ENCODE measurements at regions of chr17 and their contacts with region 1.

Region 1: DNA sequence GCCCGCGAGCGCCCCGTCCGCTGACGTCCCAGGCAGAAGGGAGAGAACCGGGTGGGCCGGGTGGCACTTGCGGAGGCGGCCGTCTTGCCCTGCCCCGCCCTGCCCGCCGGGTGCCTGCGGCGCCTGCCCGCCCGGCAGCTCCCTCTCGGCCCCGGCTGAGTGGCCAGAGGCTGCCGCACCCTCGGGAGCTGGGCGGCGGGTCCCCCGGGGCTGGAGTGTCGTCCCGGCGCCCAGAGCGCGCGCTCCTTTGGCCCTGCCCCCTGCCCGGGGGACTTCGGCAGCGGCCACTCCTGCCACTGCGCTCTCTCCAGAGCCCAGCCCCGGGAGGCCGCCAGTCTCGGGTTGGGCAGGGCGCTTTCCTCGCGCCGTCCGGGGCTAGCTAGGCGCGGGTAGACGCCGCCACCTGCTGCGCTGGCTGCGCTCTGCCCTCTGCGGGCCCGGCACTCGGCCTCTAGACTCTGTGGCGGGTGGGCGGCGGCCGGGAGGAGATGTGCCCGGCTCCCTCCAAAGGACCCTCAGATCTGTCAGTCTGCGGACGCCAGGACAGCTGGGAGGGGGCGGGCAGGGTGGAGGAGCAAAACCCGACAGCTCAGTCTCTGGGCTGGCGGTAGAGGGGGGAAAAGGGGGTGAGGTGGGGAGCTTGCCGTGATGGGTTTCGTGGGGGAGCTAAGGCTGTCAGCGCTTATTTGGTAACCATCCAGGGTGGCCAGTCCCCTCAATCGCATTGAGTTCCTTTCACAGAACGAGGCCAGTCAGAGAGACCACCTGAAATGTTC is at the start of gene ST6GALNAC2:
- DNase-seq: peak in 8 of 9 experiments; percentile 6 to 76 (median 44)
- ATAC-seq: peak; percentile 75
- H3K4me3 ChIP-seq: peak within 1 kb of the TSS; percentile 43 to 50
- H3K4me3 Mint-ChIP-seq: peak within 1 kb of the TSS; percentile 76
- H3K27ac ChIP-seq: no peak within 1 kb of the TSS
- H3K27ac Mint-ChIP-seq: no peak within 1 kb of the TSS
- H3K4me1 ChIP-seq: peaks cover 12% of the 10 kb centered on the region
- H3K4me1 Mint-ChIP-seq: peaks cover 11% of the 10 kb centered on the region
- H3K27me3 ChIP-seq: peaks cover 13 to 17% of the 10 kb centered on the region in 2 experiments
- H3K27me3 Mint-ChIP-seq: peaks cover 52% of the 10 kb centered on the region
- CTCF ChIP-seq: no peak
- total RNA-seq, gene ST6GALNAC2: 0.50 to 1.7 TPM

Region 2: DNA sequence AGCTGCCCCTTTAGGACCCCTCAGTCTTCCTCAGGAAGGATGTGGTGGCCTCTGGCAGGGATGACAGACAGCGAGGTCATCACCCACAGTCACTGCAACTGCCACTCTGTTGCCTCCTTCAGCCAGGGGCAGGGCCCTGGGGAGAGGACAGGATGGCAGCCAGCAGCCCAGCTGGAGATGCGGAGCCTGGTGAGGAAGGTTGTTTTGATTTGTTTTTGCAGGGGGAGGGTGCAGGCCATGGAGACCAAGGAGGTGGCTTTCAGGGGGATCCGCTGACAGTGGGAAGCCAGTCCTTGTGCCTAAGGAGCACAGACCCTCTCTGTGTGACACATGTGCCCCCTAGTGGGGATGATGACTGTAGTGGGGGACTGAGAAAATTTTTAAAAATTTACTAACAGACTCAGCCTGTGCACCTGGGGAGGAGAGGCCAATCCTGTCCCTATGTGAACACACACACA is 38.8 kb before region 1 on chr17:
- CTCF ChIA-PET with region 1: interaction called, 3 read pairs
- POLR2A ChIA-PET with region 1: no interaction called
- intact Hi-C with region 1: loop called in 1 of 2 experiments (anchors 5 kb)
- DNase-seq: peak; percentile 30 to 83 (median 72)
- ATAC-seq: peak; percentile 94
- H3K4me3 ChIP-seq: no peak overlapping the region
- H3K4me3 Mint-ChIP-seq: no peak overlapping the region
- H3K27ac ChIP-seq: no peak overlapping the region
- H3K27ac Mint-ChIP-seq: no peak overlapping the region
- H3K4me1 ChIP-seq: peaks cover 7% of the 10 kb centered on the region
- H3K4me1 Mint-ChIP-seq: peaks cover 11% of the 10 kb centered on the region
- H3K27me3 ChIP-seq: no peaks in the 10 kb centered on the region
- H3K27me3 Mint-ChIP-seq: peaks cover 8% of the 10 kb centered on the region
- CTCF ChIP-seq: peak; percentile 62

Region 3: GRCh38 chr17:76567634-76568432 is 18.2 kb before region 1 on chr17:
- CTCF ChIA-PET with region 1: interaction called, 4 read pairs
- POLR2A ChIA-PET with region 1: interaction called, 4 read pairs
- intact Hi-C with region 1: loop called in 1 of 2 experiments (anchors 2 kb)
- DNase-seq: peak in 2 of 9 experiments; percentile 50 to 69
- ATAC-seq: peak; percentile 35
- H3K4me3 ChIP-seq: no peak overlapping the region
- H3K4me3 Mint-ChIP-seq: no peak overlapping the region
- H3K27ac ChIP-seq: peak overlapping the region in 1 of 2 experiments; percentile 28
- H3K27ac Mint-ChIP-seq: peak overlapping the region; percentile 60
- H3K4me1 ChIP-seq: peaks cover 19% of the 10 kb centered on the region
- H3K4me1 Mint-ChIP-seq: peaks cover 39% of the 10 kb centered on the region
- H3K27me3 ChIP-seq: no peaks in the 10 kb centered on the region
- H3K27me3 Mint-ChIP-seq: no peaks in the 10 kb centered on the region
- CTCF ChIP-seq: no peak

Region 4: GRCh38 chr17:76630151-76630550 is 44.1 kb after region 1 on chr17:
- CTCF ChIA-PET with region 1: no interaction called
- POLR2A ChIA-PET with region 1: no interaction called
- intact Hi-C with region 1: no loop called
- DNase-seq: no peak
- ATAC-seq: no peak
- H3K4me3 ChIP-seq: no peak overlapping the region
- H3K4me3 Mint-ChIP-seq: no peak overlapping the region
- H3K27ac ChIP-seq: no peak overlapping the region
- H3K27ac Mint-ChIP-seq: no peak overlapping the region
- H3K4me1 ChIP-seq: no peaks in the 10 kb centered on the region
- H3K4me1 Mint-ChIP-seq: no peaks in the 10 kb centered on the region
- H3K27me3 ChIP-seq: no peaks in the 10 kb centered on the region
- H3K27me3 Mint-ChIP-seq: peaks cover 2% of the 10 kb centered on the region
- CTCF ChIP-seq: no peak

Region 5: GRCh38 chr17:76643553-76644148 is 57.6 kb after region 1 on chr17 and contains the start of gene ST6GALNAC1:
- CTCF ChIA-PET with region 1: no interaction called
- POLR2A ChIA-PET with region 1: no interaction called
- intact Hi-C with region 1: no loop called
- DNase-seq: peak in 4 of 9 experiments; percentile 15 to 53 (median 29)
- ATAC-seq: peak; percentile 62
- H3K4me3 ChIP-seq: no peak within 1 kb of the TSS
- H3K4me3 Mint-ChIP-seq: no peak within 1 kb of the TSS
- H3K27ac ChIP-seq: no peak within 1 kb of the TSS
- H3K27ac Mint-ChIP-seq: no peak within 1 kb of the TSS
- H3K4me1 ChIP-seq: peaks cover 10% of the 10 kb centered on the region
- H3K4me1 Mint-ChIP-seq: peaks cover 13% of the 10 kb centered on the region
- H3K27me3 ChIP-seq: no peaks in the 10 kb centered on the region
- H3K27me3 Mint-ChIP-seq: peaks cover 3% of the 10 kb centered on the region
- CTCF ChIP-seq: no peak
- total RNA-seq, gene ST6GALNAC1: not detected

Measured in CD8-positive, alpha-beta T cell (primary cell).